CD4-positive, alpha-beta T cell (primary cell): ENCODE measurements at regions of chr10 and their contacts with region 1.

Region 1: GRCh38 chr10:21495752-21496342 is 29.6 kb downstream of the SKIDA1 start:
- DNase-seq: peak; percentile 73 to 93 (median 86)
- ATAC-seq: peak; percentile 84
- H3K4me3 ChIP-seq: peak overlapping the region; percentile 73
- H3K4me3 Mint-ChIP-seq: peak overlapping the region; percentile 78
- H3K27ac ChIP-seq: no peak overlapping the region
- H3K27ac Mint-ChIP-seq: peak overlapping the region; percentile 16
- H3K4me1 ChIP-seq: peaks cover 46% of the 10 kb centered on the region
- H3K4me1 Mint-ChIP-seq: peaks cover 25% of the 10 kb centered on the region
- H3K27me3 ChIP-seq: peaks cover 47 to 65% of the 10 kb centered on the region in 2 experiments
- H3K27me3 Mint-ChIP-seq: peaks cover 68% of the 10 kb centered on the region
- CTCF ChIP-seq: peak; percentile 93

Region 2: DNA sequence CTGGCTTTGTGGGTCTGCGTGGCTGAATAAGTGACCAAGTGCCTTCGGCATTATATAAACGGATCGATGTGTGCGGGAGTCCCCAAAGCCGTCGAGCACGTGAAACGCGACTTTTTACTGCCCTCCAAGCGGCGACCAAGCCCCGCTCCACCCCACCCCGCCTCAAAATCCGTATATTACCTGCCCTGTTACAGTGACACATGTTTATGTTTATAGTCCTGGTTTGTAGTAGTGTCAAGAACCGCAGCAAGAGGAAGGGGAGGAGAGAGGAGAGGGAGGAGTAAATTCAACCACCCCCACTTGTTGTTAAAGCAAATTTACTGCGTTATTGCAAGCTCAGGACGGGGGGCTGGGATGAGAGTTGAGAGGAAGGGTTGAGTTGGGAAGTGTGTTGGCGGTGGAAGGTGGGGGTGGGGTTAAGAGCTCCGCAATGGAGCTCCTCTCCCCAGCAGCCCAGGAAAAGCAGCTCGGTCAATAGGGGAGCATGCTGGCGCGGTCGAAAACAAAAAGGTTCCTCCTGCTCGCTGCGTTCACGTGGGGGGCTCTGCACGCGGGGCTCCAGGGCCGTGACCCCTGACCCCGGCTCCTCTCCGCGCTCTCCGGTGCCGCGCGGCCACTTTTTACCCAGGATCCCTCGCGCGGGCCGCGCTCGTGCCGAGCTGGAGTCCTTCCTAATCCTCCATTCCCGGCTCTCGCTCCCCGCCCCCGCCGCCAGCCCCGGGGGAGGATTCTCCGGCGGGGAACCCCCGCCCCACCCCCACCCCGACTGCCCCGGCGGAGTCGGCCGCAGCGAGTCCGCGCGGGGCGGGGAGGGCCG is 29.7 kb after region 1 on chr10 and contains the start of gene SKIDA1:
- CTCF ChIA-PET with region 1: interaction called, 5 read pairs
- POLR2A ChIA-PET with region 1: interaction called, 40 read pairs
- intact Hi-C with region 1: loop called in 1 of 2 experiments (anchors 5 kb)
- DNase-seq: peak in 13 of 14 experiments; percentile 33 to 83 (median 50)
- ATAC-seq: peak; percentile 79
- H3K4me3 ChIP-seq: peak within 1 kb of the TSS; percentile 80
- H3K4me3 Mint-ChIP-seq: peak within 1 kb of the TSS; percentile 98
- H3K27ac ChIP-seq: peak within 1 kb of the TSS; percentile 61 to 66
- H3K27ac Mint-ChIP-seq: peak within 1 kb of the TSS; percentile 86
- H3K4me1 ChIP-seq: peaks cover 25% of the 10 kb centered on the region
- H3K4me1 Mint-ChIP-seq: peaks cover 37% of the 10 kb centered on the region
- H3K27me3 ChIP-seq: peaks cover 5 to 26% of the 10 kb centered on the region in 2 experiments
- H3K27me3 Mint-ChIP-seq: peaks cover 36% of the 10 kb centered on the region
- CTCF ChIP-seq: no peak
- total RNA-seq, gene SKIDA1: 0.22 to 0.25 TPM

Region 3: DNA sequence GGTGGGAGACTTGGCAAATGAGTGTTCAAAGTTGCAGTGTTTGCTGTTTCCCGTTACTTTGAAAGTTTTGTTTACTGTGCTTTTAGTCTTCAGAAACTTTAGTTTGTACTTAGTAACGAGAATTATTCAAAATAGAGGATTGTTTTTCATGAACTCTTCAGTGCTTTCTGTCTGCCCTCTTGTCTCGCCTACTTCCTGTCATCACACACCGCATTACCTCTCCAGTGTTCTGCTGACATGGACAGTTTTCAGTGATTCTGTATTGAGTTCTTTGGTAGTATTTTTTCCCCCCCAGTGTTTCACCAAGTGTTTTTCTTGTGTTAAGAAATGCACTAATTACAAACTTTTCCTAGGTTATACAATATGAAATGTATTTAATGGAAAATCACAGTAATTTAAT is 245.1 kb after region 1 on chr10:
- CTCF ChIA-PET with region 1: interaction called, 4 read pairs
- POLR2A ChIA-PET with region 1: interaction called, 3 read pairs
- intact Hi-C with region 1: loop called in 1 of 2 experiments (anchors 5 kb)
- DNase-seq: peak in 12 of 14 experiments; percentile 17 to 85 (median 46)
- ATAC-seq: peak; percentile 93
- H3K4me3 ChIP-seq: no peak overlapping the region
- H3K4me3 Mint-ChIP-seq: peak overlapping the region; percentile 81
- H3K27ac ChIP-seq: peak overlapping the region; percentile 69 to 80
- H3K27ac Mint-ChIP-seq: peak overlapping the region; percentile 97
- H3K4me1 ChIP-seq: peaks cover 49% of the 10 kb centered on the region
- H3K4me1 Mint-ChIP-seq: peaks cover 67% of the 10 kb centered on the region
- H3K27me3 ChIP-seq: no peaks in the 10 kb centered on the region
- H3K27me3 Mint-ChIP-seq: no peaks in the 10 kb centered on the region
- CTCF ChIP-seq: no peak

Region 4: GRCh38 chr10:21995557-21995956 is 499.7 kb after region 1 on chr10:
- CTCF ChIA-PET with region 1: interaction called, 13 read pairs
- POLR2A ChIA-PET with region 1: interaction called, 4 read pairs
- intact Hi-C with region 1: loop called (anchors 5 kb)
- DNase-seq: no peak
- ATAC-seq: no peak
- H3K4me3 ChIP-seq: no peak overlapping the region
- H3K4me3 Mint-ChIP-seq: no peak overlapping the region
- H3K27ac ChIP-seq: no peak overlapping the region
- H3K27ac Mint-ChIP-seq: no peak overlapping the region
- H3K4me1 ChIP-seq: peaks cover 3% of the 10 kb centered on the region
- H3K4me1 Mint-ChIP-seq: peaks cover 22% of the 10 kb centered on the region
- H3K27me3 ChIP-seq: no peaks in the 10 kb centered on the region
- H3K27me3 Mint-ChIP-seq: no peaks in the 10 kb centered on the region
- CTCF ChIP-seq: no peak

Region 5: GRCh38 chr10:22316285-22317120 is 820.7 kb after region 1 on chr10 and contains the start of gene COMMD3:
- CTCF ChIA-PET with region 1: interaction called, 3 read pairs
- POLR2A ChIA-PET with region 1: interaction called, 4 read pairs
- intact Hi-C with region 1: loop called in 1 of 2 experiments (anchors 5 kb)
- DNase-seq: peak; percentile 59 to 94 (median 74)
- ATAC-seq: peak; percentile 55
- H3K4me3 ChIP-seq: peak within 1 kb of the TSS; percentile 82
- H3K4me3 Mint-ChIP-seq: peak within 1 kb of the TSS; percentile 95
- H3K27ac ChIP-seq: peak within 1 kb of the TSS; percentile 71 to 74
- H3K27ac Mint-ChIP-seq: peak within 1 kb of the TSS; percentile 90
- H3K4me1 ChIP-seq: peaks cover 17% of the 10 kb centered on the region
- H3K4me1 Mint-ChIP-seq: peaks cover 42% of the 10 kb centered on the region
- H3K27me3 ChIP-seq: peaks cover 0 to 5% of the 10 kb centered on the region in 2 experiments
- H3K27me3 Mint-ChIP-seq: peaks cover 26% of the 10 kb centered on the region
- CTCF ChIP-seq: no peak
- total RNA-seq, gene COMMD3: 43.2 to 51.0 TPM

Region 6: DNA sequence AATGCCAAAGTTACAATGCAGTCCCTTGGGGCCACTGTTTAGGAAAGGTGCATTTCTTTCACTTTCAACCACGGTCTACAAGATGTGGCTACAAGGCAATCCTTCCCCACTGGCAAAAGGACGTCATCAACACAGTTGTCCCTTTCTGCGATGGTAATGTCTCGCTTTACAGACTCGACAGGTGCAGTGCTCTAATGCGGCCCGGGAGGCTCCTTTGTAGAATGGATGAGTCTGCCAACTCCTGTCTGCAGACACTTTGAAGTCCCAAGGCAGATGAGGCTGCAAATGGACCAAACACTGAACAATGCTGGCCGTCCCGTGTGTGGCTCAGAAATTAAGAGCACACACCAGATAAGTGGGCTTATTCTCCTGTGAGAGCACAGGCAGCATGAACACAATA is 1084.9 kb after region 1 on chr10:
- CTCF ChIA-PET with region 1: no interaction called
- POLR2A ChIA-PET with region 1: no interaction called
- intact Hi-C with region 1: loop called in 1 of 2 experiments (anchors 10 kb)
- DNase-seq: no peak
- ATAC-seq: no peak
- H3K4me3 ChIP-seq: no peak overlapping the region
- H3K4me3 Mint-ChIP-seq: no peak overlapping the region
- H3K27ac ChIP-seq: no peak overlapping the region
- H3K27ac Mint-ChIP-seq: peak overlapping the region; percentile 21
- H3K4me1 ChIP-seq: peaks cover 9% of the 10 kb centered on the region
- H3K4me1 Mint-ChIP-seq: peaks cover 54% of the 10 kb centered on the region
- H3K27me3 ChIP-seq: no peaks in the 10 kb centered on the region
- H3K27me3 Mint-ChIP-seq: no peaks in the 10 kb centered on the region
- CTCF ChIP-seq: no peak